Activated B cell treated with CpG ODN at 0.5 μM for 24 hours (primary cell): ENCODE measurements at regions of chr10 and their contacts with region 1.

Region 1: GRCh38 chr10:58291538-58292174 is 22.7 kb downstream of the CISD1 start:
- DNase-seq: no peak
- ATAC-seq: peak; percentile 79
- H3K4me3 Mint-ChIP-seq: no peak overlapping the region
- H3K27ac Mint-ChIP-seq: no peak overlapping the region
- H3K4me1 Mint-ChIP-seq: no peaks in the 10 kb centered on the region
- H3K27me3 Mint-ChIP-seq: no peaks in the 10 kb centered on the region
- CTCF ChIP-seq: peak; percentile 44

Region 2: DNA sequence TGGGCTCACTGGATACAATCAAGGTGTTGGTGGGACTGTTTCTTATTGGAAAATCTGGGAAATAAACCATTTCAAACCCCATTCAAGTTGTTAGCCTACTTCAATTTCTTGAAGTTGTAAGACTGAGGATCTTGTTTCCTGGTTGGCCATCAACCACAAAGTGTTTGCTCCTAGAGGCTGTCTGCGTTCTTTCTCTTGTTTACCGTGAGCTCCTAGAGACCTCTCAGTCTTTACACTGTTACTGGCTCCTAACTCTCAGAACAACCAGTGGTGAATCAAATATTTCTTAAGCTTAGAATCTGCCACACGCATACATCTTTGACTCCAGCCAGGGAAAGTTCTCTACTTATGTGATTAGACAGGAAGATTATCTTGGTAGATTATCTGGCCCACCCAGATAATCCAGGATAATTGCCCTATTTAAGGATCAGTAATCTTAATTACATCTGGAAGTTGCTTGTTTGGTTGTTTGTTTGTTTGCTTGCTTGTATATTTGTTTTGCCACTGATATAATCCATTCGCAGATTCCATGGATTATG is 822.7 kb before region 1 on chr10:
- CTCF ChIA-PET with region 1: no interaction called
- POLR2A ChIA-PET with region 1: no interaction called
- intact Hi-C with region 1: no loop called
- DNase-seq: no peak
- ATAC-seq: no peak
- H3K4me3 Mint-ChIP-seq: no peak overlapping the region
- H3K27ac Mint-ChIP-seq: no peak overlapping the region
- H3K4me1 Mint-ChIP-seq: no peaks in the 10 kb centered on the region
- H3K27me3 Mint-ChIP-seq: no peaks in the 10 kb centered on the region
- CTCF ChIP-seq: no peak

Region 3: GRCh38 chr10:58177362-58177947 is 114.2 kb before region 1 on chr10:
- CTCF ChIA-PET with region 1: interaction called, 170 read pairs
- POLR2A ChIA-PET with region 1: no interaction called
- intact Hi-C with region 1: loop called (anchors 1 kb)
- DNase-seq: no peak
- ATAC-seq: no peak
- H3K4me3 Mint-ChIP-seq: no peak overlapping the region
- H3K27ac Mint-ChIP-seq: no peak overlapping the region
- H3K4me1 Mint-ChIP-seq: no peaks in the 10 kb centered on the region
- H3K27me3 Mint-ChIP-seq: peaks cover 2% of the 10 kb centered on the region
- CTCF ChIP-seq: no peak

Region 4: GRCh38 chr10:58275908-58276307 is 15.7 kb before region 1 on chr10:
- CTCF ChIA-PET with region 1: interaction called, 10 read pairs
- POLR2A ChIA-PET with region 1: no interaction called
- intact Hi-C with region 1: no loop called
- DNase-seq: no peak
- ATAC-seq: no peak
- H3K4me3 Mint-ChIP-seq: no peak overlapping the region
- H3K27ac Mint-ChIP-seq: no peak overlapping the region
- H3K4me1 Mint-ChIP-seq: peaks cover 5% of the 10 kb centered on the region
- H3K27me3 Mint-ChIP-seq: no peaks in the 10 kb centered on the region
- CTCF ChIP-seq: no peak